GM12878 (cell line): ENCODE measurements at regions of chr19 and their contacts with region 1.

Region 1: DNA sequence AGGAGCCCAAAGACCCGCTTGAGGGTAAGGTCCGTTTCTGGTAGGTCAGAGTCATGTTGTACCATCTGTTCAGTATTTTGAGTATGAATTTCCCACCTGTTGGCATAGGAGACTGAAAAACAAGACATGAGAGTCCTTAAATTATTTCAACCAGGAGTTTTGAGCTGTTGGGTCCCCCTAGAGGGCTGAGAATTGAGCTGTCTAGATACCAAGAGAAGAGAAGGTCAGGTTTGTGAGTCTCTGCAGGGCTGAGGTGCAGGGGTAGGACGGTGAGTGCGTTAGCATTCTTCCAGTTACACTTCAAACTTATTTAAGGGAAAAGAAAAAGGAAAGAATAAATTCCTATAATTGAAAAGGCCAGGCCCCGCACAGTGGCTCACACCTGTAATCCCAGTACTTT is 5.0 kb downstream of the CBLC start:
- DNase-seq: no peak
- ATAC-seq: no peak
- H3K4me3 ChIP-seq: no peak overlapping the region
- H3K27ac ChIP-seq: no peak overlapping the region
- H3K4me1 ChIP-seq: no peaks in the 10 kb centered on the region; the same call in 1 of the 2 replicates
- H3K27me3 ChIP-seq: no peaks in the 10 kb centered on the region
- CTCF ChIP-seq: no peak
- EP300 ChIP-seq: no peak
- POLR2A ChIP-seq: no peak
- RAD21 ChIP-seq: no peak

Region 2: DNA sequence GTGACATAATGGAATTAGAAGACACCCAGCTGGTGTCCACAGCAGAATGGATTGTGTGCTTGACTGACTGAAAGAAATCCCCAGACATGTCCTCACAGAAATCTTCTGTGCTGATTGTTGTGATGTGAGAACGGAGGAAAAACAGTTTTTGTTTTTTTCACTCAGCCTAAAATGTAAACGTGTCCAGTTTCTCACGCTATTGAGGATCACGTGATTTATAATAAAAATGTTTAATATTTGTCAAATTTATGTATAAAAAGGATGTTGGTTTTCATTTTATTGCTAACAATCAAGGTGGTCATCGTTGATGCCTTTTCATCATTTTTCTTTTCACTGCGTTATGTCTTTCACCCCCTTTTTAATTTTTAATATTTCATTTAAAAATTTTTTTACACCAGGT is 322.6 kb before region 1 on chr19:
- CTCF ChIA-PET with region 1: no interaction called
- POLR2A ChIA-PET with region 1: no interaction called
- RAD21 ChIA-PET with region 1: no interaction called
- SMC1A ChIA-PET with region 1: no interaction called
- in situ Hi-C with region 1: no loop called
- intact Hi-C with region 1: no loop called
- DNase-seq: no peak
- ATAC-seq: no peak
- H3K4me3 ChIP-seq: no peak overlapping the region
- H3K27ac ChIP-seq: no peak overlapping the region
- H3K4me1 ChIP-seq: no peaks in the 10 kb centered on the region
- H3K27me3 ChIP-seq: no peaks in the 10 kb centered on the region
- CTCF ChIP-seq: no peak
- EP300 ChIP-seq: no peak
- POLR2A ChIP-seq: no peak
- RAD21 ChIP-seq: no peak

Region 3: GRCh38 chr19:44689056-44689895 is 93.5 kb before region 1 on chr19:
- CTCF ChIA-PET with region 1: interaction called, 12 read pairs
- POLR2A ChIA-PET with region 1: interaction called, 3 read pairs
- RAD21 ChIA-PET with region 1: interaction called, 3 read pairs
- SMC1A ChIA-PET with region 1: no interaction called
- in situ Hi-C with region 1: no loop called
- intact Hi-C with region 1: no loop called
- DNase-seq: no peak
- ATAC-seq: peak; percentile 54
- H3K4me3 ChIP-seq: no peak overlapping the region
- H3K27ac ChIP-seq: no peak overlapping the region
- H3K4me1 ChIP-seq: peaks cover 44% of the 10 kb centered on the region
- H3K27me3 ChIP-seq: no peaks in the 10 kb centered on the region
- CTCF ChIP-seq: peak; percentile 89 to 98 (median 92)
- EP300 ChIP-seq: no peak
- POLR2A ChIP-seq: no peak
- RAD21 ChIP-seq: peak; percentile 82

Region 4: GRCh38 chr19:44800461-44800860 is 17.7 kb after region 1 on chr19:
- CTCF ChIA-PET with region 1: interaction called, 24 read pairs
- POLR2A ChIA-PET with region 1: no interaction called
- RAD21 ChIA-PET with region 1: interaction called, 4 read pairs
- SMC1A ChIA-PET with region 1: interaction called, 4 read pairs
- in situ Hi-C with region 1: no loop called
- intact Hi-C with region 1: no loop called
- DNase-seq: peak; percentile 34
- ATAC-seq: peak; percentile 99
- H3K4me3 ChIP-seq: no peak overlapping the region
- H3K27ac ChIP-seq: no peak overlapping the region
- H3K4me1 ChIP-seq: peaks cover 21% of the 10 kb centered on the region
- H3K27me3 ChIP-seq: no peaks in the 10 kb centered on the region; a peak in 1 of 4 replicates
- CTCF ChIP-seq: peak; percentile 87 to 98 (median 95)
- EP300 ChIP-seq: no peak; a peak in 1 of 4 replicates
- POLR2A ChIP-seq: no peak
- RAD21 ChIP-seq: peak; percentile 72